ENCODE measurements at regions of chr16 and their contacts with region 1.

Region 1: GRCh38 chr16:1705688-1706385 is at the start of gene MAPK8IP3:
- DNase-seq: peak; percentile 84 to 99 (median 94)
- ATAC-seq: peak; percentile 75
- H3K4me3 ChIP-seq: peak within 1 kb of the TSS; percentile 98
- H3K4me3 Mint-ChIP-seq: peak within 1 kb of the TSS; percentile 96
- H3K27ac ChIP-seq: peak within 1 kb of the TSS; percentile 77 to 79
- H3K27ac Mint-ChIP-seq: peak within 1 kb of the TSS; percentile 97
- H3K4me1 ChIP-seq: peaks cover 35% of the 10 kb centered on the region
- H3K4me1 Mint-ChIP-seq: peaks cover 38% of the 10 kb centered on the region
- H3K27me3 ChIP-seq: no peaks in the 10 kb centered on the region
- H3K27me3 Mint-ChIP-seq: no peaks in the 10 kb centered on the region
- CTCF ChIP-seq: peak; percentile 70
- total RNA-seq, gene MAPK8IP3: 290 to 297 TPM

Region 2: DNA sequence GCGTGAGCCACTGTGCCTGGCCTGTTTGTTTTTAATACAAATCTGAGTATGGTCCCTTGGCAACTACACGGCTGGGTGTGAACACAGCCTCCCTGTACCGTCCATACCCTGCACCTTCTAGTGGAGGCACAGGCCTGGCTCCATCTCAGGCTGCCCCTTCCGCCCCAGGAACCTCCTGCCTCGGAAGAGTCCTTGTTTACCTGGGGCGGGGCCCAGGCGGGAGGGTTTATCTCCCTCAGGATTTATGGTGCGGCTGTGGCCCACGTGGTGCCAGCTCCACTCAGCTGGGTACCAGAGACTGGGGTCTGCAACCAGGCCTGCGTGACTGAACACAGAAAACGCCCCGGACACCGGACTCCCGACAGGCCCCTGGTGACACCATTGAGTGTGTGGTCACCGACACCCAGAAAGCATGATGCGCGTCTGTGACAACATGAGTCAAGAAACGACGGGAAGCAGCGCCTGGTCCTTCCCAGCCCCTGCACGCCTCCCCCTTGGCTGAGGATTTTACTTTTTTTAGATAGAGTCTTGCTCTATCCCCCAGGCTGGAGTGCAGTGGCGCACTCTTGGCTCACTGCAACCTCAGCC is 310.3 kb before region 1 on chr16:
- CTCF ChIA-PET with region 1: no interaction called
- POLR2A ChIA-PET with region 1: no interaction called
- intact Hi-C with region 1: no loop called
- DNase-seq: no peak
- ATAC-seq: no peak
- H3K4me3 ChIP-seq: no peak overlapping the region
- H3K4me3 Mint-ChIP-seq: no peak overlapping the region
- H3K27ac ChIP-seq: no peak overlapping the region
- H3K27ac Mint-ChIP-seq: no peak overlapping the region
- H3K4me1 ChIP-seq: no peaks in the 10 kb centered on the region
- H3K4me1 Mint-ChIP-seq: no peaks in the 10 kb centered on the region
- H3K27me3 ChIP-seq: no peaks in the 10 kb centered on the region
- H3K27me3 Mint-ChIP-seq: no peaks in the 10 kb centered on the region
- CTCF ChIP-seq: no peak

Region 3: DNA sequence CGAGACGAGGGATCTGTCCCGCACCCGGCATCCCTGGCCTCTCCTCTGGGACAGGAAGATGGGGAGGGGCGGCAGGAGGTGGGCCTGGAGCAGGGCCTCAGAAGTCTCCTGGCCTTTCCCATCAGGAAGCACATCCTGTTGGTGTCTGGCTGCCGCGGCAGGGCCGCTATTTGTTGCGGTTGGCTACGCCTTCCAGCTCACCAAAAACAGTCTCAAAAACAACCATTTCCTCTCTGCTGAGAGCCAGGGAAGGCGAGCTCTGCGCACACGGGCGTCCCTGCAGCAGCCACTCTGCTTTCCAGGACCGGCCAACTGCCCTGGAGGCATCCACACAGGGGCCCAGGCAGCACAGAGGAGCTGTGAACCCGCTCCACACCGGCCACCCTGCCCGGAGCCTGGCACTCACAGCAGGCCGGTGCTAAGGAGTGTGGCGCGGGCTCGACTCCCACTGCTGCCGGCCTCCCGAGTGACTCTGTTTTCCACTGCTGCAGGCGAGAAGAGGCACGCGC is 172.3 kb before region 1 on chr16 and contains the start of gene TMEM204:
- CTCF ChIA-PET with region 1: interaction called, 4 read pairs
- POLR2A ChIA-PET with region 1: interaction called, 7 read pairs
- intact Hi-C with region 1: loop called in 1 of 2 experiments (anchors 1 kb)
- DNase-seq: peak in 13 of 14 experiments; percentile 40 to 75 (median 58)
- ATAC-seq: peak; percentile 47
- H3K4me3 ChIP-seq: peak within 1 kb of the TSS; percentile 98
- H3K4me3 Mint-ChIP-seq: peak within 1 kb of the TSS; percentile 99
- H3K27ac ChIP-seq: peak within 1 kb of the TSS; percentile 55 to 56
- H3K27ac Mint-ChIP-seq: peak within 1 kb of the TSS; percentile 98
- H3K4me1 ChIP-seq: peaks cover 64% of the 10 kb centered on the region
- H3K4me1 Mint-ChIP-seq: peaks cover 59% of the 10 kb centered on the region
- H3K27me3 ChIP-seq: no peaks in the 10 kb centered on the region
- H3K27me3 Mint-ChIP-seq: no peaks in the 10 kb centered on the region
- CTCF ChIP-seq: no peak
- total RNA-seq, gene TMEM204: 20.5 to 22.1 TPM

Region 4: GRCh38 chr16:1610276-1611017 is 95.4 kb before region 1 on chr16:
- CTCF ChIA-PET with region 1: interaction called, 8 read pairs
- POLR2A ChIA-PET with region 1: interaction called, 11 read pairs
- intact Hi-C with region 1: loop called in 1 of 2 experiments (anchors 5 kb)
- DNase-seq: peak; percentile 85 to 96 (median 90)
- ATAC-seq: peak; percentile 65
- H3K4me3 ChIP-seq: peak overlapping the region; percentile 53
- H3K4me3 Mint-ChIP-seq: peak overlapping the region; percentile 72
- H3K27ac ChIP-seq: peak overlapping the region; percentile 45 to 46
- H3K27ac Mint-ChIP-seq: peak overlapping the region; percentile 89
- H3K4me1 ChIP-seq: peaks cover 44% of the 10 kb centered on the region
- H3K4me1 Mint-ChIP-seq: peaks cover 24% of the 10 kb centered on the region
- H3K27me3 ChIP-seq: peaks cover 6 to 10% of the 10 kb centered on the region in 2 experiments
- H3K27me3 Mint-ChIP-seq: peaks cover 14% of the 10 kb centered on the region
- CTCF ChIP-seq: no peak

Region 5: GRCh38 chr16:1666316-1666715 is 39.5 kb before region 1 on chr16:
- CTCF ChIA-PET with region 1: no interaction called
- POLR2A ChIA-PET with region 1: no interaction called
- intact Hi-C with region 1: no loop called
- DNase-seq: no peak
- ATAC-seq: no peak
- H3K4me3 ChIP-seq: no peak overlapping the region
- H3K4me3 Mint-ChIP-seq: no peak overlapping the region
- H3K27ac ChIP-seq: no peak overlapping the region
- H3K27ac Mint-ChIP-seq: no peak overlapping the region
- H3K4me1 ChIP-seq: no peaks in the 10 kb centered on the region
- H3K4me1 Mint-ChIP-seq: no peaks in the 10 kb centered on the region
- H3K27me3 ChIP-seq: no peaks in the 10 kb centered on the region
- H3K27me3 Mint-ChIP-seq: no peaks in the 10 kb centered on the region
- CTCF ChIP-seq: no peak

Region 6: GRCh38 chr16:1677802-1678496 is 27.9 kb before region 1 on chr16 and contains the start of gene JPT2:
- CTCF ChIA-PET with region 1: interaction called, 39 read pairs
- POLR2A ChIA-PET with region 1: interaction called, 67 read pairs
- intact Hi-C with region 1: loop called (anchors 1 to 2 kb)
- DNase-seq: peak; percentile 90 to 98 (median 95)
- ATAC-seq: peak; percentile 97
- H3K4me3 ChIP-seq: peak within 1 kb of the TSS; percentile 66
- H3K4me3 Mint-ChIP-seq: peak within 1 kb of the TSS; percentile 93
- H3K27ac ChIP-seq: peak within 1 kb of the TSS in 1 of 2 donors; percentile 61
- H3K27ac Mint-ChIP-seq: peak within 1 kb of the TSS; percentile 71
- H3K4me1 ChIP-seq: peaks cover 25% of the 10 kb centered on the region
- H3K4me1 Mint-ChIP-seq: peaks cover 31% of the 10 kb centered on the region
- H3K27me3 ChIP-seq: no peaks in the 10 kb centered on the region
- H3K27me3 Mint-ChIP-seq: no peaks in the 10 kb centered on the region
- CTCF ChIP-seq: no peak
- total RNA-seq, gene JPT2: 2.5 to 3.2 TPM

Region 7: GRCh38 chr16:1723450-1724147 is 17.8 kb after region 1 on chr16:
- CTCF ChIA-PET with region 1: interaction called, 9 read pairs
- POLR2A ChIA-PET with region 1: interaction called, 13 read pairs
- intact Hi-C with region 1: loop called in 1 of 2 experiments (anchors 1 kb)
- DNase-seq: peak in 12 of 14 experiments; percentile 14 to 70 (median 39)
- ATAC-seq: peak; percentile 41
- H3K4me3 ChIP-seq: no peak overlapping the region
- H3K4me3 Mint-ChIP-seq: peak overlapping the region; percentile 5
- H3K27ac ChIP-seq: no peak overlapping the region
- H3K27ac Mint-ChIP-seq: peak overlapping the region; percentile 61
- H3K4me1 ChIP-seq: peaks cover 51% of the 10 kb centered on the region
- H3K4me1 Mint-ChIP-seq: peaks cover 45% of the 10 kb centered on the region
- H3K27me3 ChIP-seq: no peaks in the 10 kb centered on the region
- H3K27me3 Mint-ChIP-seq: no peaks in the 10 kb centered on the region
- CTCF ChIP-seq: peak; percentile 91

Region 8: DNA sequence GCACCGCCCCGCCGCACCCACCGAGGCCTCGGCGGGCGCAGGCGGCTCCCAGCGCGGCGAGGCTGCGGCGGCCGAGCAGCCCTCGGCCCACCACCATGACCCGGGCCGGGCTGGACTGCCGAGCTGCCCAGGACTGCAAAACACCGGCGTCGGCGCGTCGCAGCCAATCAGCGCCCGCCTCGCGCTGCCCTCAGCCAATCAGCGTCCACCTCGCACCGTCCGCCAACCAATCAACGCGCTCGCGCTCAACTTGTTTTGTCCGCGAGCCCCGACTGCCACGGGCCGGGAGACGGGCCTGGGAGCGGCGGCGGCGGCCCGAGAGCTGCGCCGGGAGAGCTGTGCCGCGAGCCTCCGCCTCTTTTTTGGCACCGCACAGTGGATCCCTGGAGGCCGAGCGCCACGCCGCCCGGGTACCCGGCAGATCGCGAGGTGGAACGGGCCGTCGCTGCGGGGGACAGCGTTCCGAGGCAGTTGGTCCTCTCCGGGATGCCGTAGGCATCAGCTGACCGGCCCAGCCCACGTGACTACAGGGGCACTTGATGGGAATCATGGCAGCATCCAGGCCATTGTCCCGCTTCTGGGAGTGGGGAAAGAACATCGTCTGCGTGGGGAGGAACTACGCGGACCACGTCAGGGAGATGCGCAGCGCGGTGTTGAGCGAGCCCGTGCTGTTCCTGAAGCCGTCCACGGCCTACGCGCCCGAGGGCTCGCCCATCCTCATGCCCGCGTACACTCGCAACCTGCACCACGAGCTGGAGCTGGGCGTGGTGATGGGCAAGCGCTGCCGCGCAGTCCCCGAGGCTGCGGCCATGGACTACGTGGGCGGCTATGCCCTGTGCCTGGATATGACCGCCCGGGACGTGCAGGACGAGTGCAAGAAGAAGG is 121.1 kb after region 1 on chr16 and contains the starts of genes FAHD1 and HAGH:
- CTCF ChIA-PET with region 1: interaction called, 3 read pairs
- POLR2A ChIA-PET with region 1: interaction called, 11 read pairs
- intact Hi-C with region 1: loop called in 1 of 2 experiments (anchors 5 kb)
- DNase-seq: peak; percentile 82 to 97 (median 88)
- ATAC-seq: peak; percentile 82
- H3K4me3 ChIP-seq: peak within 1 kb of the TSS; percentile 76
- H3K4me3 Mint-ChIP-seq: peak within 1 kb of the TSS; percentile 91
- H3K27ac ChIP-seq: peak within 1 kb of the TSS; percentile 72 to 77
- H3K27ac Mint-ChIP-seq: peak within 1 kb of the TSS; percentile 90
- H3K4me1 ChIP-seq: peaks cover 51% of the 10 kb centered on the region
- H3K4me1 Mint-ChIP-seq: peaks cover 37% of the 10 kb centered on the region
- H3K27me3 ChIP-seq: no peaks in the 10 kb centered on the region
- H3K27me3 Mint-ChIP-seq: no peaks in the 10 kb centered on the region
- CTCF ChIP-seq: no peak
- total RNA-seq, gene FAHD1: 4.1 to 4.5 TPM
- total RNA-seq, gene HAGH: 20.9 to 22.7 TPM

Measured in CD4-positive, alpha-beta T cell (primary cell).